Tibial artery (tissue), 4 donors: ENCODE measurements at regions of chr19 and their contacts with region 1.

Region 1: DNA sequence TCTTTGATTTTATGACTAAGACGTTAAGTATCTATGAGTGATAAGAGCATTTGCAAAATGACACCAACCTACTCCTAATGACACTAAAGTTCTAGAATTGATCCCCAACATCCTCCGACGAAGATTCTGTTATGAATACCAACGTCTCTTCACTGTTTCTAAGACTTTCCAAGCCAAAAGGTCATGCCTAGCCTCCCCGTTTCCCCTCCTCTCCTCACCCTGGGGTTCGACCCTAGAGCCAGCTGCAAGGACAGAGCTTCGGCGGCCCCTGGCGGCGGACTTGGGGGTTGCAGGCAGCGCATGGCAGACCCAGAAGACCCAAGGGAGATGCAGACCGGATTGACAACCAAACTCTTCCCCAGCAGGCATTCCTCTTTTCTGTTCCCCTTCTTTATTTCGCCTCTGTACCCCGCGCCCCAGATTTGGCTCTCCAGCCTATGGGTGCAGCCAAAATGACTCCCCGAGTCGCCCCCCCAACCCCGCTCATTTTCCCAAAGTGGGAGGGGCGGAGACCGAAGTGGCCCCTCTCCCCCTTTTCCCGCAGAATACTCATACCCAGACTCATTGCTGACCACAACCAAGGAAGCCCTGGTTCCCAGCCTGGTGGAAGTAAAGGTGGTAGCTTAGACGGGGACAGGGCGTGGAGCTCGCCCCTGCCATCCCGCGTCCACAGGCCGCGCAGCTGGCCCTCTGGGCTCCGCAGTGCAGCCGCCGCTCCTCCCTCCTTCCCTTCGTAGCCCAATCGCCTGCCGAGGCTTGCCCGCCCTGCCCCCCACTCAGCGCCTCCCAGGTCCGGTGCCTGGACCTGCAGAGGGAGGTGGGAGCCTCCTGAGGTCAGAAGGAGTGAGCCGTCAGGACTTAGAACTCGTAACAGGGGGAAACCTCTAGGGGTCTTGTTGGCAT is 4.1 kb upstream of the EML2 start:
- DNase-seq: peak; percentile 77 to 86
- H3K4me3 ChIP-seq: no peak overlapping the region
- H3K27ac ChIP-seq: no peak overlapping the region
- H3K4me1 ChIP-seq: peaks cover 0 to 55% (median 28%) of the 10 kb centered on the region in 4 donors
- H3K27me3 ChIP-seq: peaks cover 0 to 37% of the 10 kb centered on the region in 2 donors
- CTCF ChIP-seq: peak; percentile 96 to 98

Region 2: GRCh38 chr19:45478454-45479238 is 164.6 kb before region 1 on chr19:
- intact Hi-C with region 1: no loop called
- DNase-seq: peak; percentile 77 to 89
- H3K4me3 ChIP-seq: peak overlapping the region; percentile 51 to 55
- H3K27ac ChIP-seq: peak overlapping the region; percentile 94 to 98
- H3K4me1 ChIP-seq: peaks cover 0 to 12% (median 8%) of the 10 kb centered on the region in 4 donors
- H3K27me3 ChIP-seq: no peaks in the 10 kb centered on the region
- CTCF ChIP-seq: peak; percentile 95 to 98

Region 3: DNA sequence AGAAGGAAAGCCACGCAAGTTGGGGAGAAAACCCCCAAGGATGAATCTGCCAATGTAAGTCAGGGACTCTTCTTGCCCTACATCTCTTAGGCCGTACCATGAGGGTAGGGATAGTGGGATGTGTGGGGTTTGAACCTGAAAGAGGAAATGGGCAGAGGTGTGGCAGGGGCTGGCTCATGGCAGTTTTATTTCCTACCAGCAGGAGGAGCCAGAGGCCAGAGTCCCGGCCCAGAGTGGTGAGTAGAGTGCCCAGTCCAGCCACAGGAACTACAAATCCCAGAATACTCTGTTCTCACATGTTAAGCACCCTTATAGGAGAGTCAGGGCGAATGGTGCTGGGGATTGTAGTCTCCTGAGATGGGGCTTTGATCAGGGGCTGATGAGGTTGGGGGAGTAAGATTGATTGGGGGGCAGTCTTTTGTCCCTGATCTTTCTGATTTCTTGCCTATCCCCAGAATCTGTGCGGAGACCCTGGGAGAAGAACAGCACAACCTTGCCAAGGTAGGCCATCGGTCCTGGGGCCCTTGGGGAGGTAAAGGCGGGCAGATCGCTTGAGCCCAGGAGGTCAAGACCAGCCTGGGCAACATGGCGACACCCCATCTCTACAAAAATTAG is 119.5 kb before region 1 on chr19:
- intact Hi-C with region 1: loop called (anchors 2 kb)
- DNase-seq: peak; percentile 77 to 88
- H3K4me3 ChIP-seq: no peak overlapping the region
- H3K27ac ChIP-seq: peak overlapping the region; percentile 9 to 24
- H3K4me1 ChIP-seq: peaks cover 0 to 22% (median 8%) of the 10 kb centered on the region in 4 donors
- H3K27me3 ChIP-seq: no peaks in the 10 kb centered on the region
- CTCF ChIP-seq: peak; percentile 86 to 92

Region 4: GRCh38 chr19:45547976-45548609 is 95.2 kb before region 1 on chr19:
- intact Hi-C with region 1: no loop called
- DNase-seq: no peak
- H3K4me3 ChIP-seq: no peak overlapping the region
- H3K27ac ChIP-seq: no peak overlapping the region
- H3K4me1 ChIP-seq: no peaks in the 10 kb centered on the region
- H3K27me3 ChIP-seq: no peaks in the 10 kb centered on the region
- CTCF ChIP-seq: no peak

Region 5: GRCh38 chr19:45584332-45585157 is 58.7 kb before region 1 on chr19 and contains the start of gene OPA3:
- intact Hi-C with region 1: no loop called
- DNase-seq: peak; percentile 100
- H3K4me3 ChIP-seq: peak within 1 kb of the TSS; percentile 64 to 69
- H3K27ac ChIP-seq: peak within 1 kb of the TSS; percentile 89 to 92
- H3K4me1 ChIP-seq: peaks cover 0 to 14% (median 12%) of the 10 kb centered on the region in 4 donors
- H3K27me3 ChIP-seq: peaks cover 0 to 3% of the 10 kb centered on the region in 2 donors
- CTCF ChIP-seq: peak in 1 of 2 experiments; percentile 22

Region 6: GRCh38 chr19:45607071-45608029 is 35.9 kb before region 1 on chr19:
- intact Hi-C with region 1: loop called (anchors 2 kb)
- DNase-seq: peak; percentile 64 to 83
- H3K4me3 ChIP-seq: peak overlapping the region in 1 of 2 donors; percentile 8
- H3K27ac ChIP-seq: no peak overlapping the region
- H3K4me1 ChIP-seq: peaks cover 0 to 11% (median 5%) of the 10 kb centered on the region in 4 donors
- H3K27me3 ChIP-seq: peaks cover 2 to 19% of the 10 kb centered on the region in 2 donors
- CTCF ChIP-seq: peak; percentile 87 to 93